Dorsolateral prefrontal cortex (tissue), 120 donors: ENCODE measurements at regions of chr2 and their contacts with region 1.

Region 1: DNA sequence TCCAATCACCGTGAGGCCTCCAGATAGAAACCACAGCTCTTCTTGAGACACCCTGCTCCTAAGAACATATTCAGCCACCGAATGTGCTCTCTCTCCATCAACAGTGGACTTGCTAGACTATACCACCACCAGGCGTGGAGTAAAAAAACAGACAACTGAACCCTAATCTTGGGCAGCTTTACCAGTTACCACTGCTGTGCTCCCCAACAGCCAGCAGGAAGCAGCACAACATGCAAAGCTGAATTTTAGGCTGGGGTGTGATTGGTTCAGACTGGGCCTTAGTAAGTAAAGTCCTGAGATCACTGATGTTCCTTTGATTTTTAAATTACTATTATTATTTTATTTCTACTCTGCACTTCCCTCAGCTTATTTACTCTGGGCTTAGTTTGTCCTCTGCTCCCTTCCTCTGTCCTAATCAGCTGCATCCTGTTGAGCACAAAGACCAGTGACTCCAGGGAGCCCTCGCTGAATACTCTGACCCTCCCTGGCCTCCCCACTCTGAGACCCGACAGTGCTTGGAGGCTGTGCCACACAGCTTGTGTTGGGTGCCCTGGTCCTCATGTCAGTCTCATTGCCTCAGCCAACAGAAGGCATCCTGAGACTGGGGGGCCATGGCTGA is 21.9 kb downstream of the MRPL35 start:
- DNase-seq: peak in 5 of 10 donors; percentile 13 to 65 (median 58)
- H3K4me3 ChIP-seq: no peak overlapping the region
- H3K27ac ChIP-seq: peak overlapping the region in 40 of 59 donors; percentile 10 to 95 (median 82)
- H3K27me3 ChIP-seq: no peaks in the 10 kb centered on the region
- CTCF ChIP-seq: peak; percentile 23 to 98 (median 93)

Region 2: DNA sequence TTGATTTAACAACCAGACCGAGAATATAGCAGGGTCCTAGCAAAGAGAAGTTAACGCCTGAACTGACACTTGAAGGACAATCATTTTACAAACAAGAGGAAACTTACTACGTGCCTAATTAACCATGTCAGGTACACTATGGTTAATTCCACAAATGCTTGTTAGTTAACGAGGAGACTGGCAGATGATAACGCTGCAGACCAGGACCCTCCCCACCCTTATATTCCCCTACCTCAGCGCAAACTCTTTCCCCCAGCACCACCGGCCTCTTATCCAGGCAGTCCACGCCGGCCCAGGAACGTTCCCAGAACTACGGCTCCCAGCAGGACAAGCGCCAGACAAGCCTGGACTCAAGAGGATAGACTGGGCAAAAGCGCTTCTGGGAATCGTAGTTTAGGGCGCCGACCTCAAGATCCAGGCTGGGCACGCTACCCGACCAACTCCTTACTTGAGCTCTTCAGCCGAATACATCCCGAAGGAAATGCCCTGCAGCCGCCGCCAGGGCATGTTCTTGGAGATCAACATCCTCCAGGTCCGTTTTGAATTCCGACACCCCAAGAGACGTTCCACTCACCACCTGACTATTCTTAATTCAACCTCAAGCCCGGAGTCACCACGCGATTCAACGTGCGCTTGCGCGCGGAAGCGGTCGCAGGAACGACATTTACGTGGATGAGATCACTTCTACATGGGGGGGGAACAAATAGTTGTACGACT is 115.8 kb before region 1 on chr2 and contains the start of gene POLR1A:
- intact Hi-C with region 1: no loop called
- DNase-seq: peak; percentile 82 to 96 (median 94)
- H3K4me3 ChIP-seq: peak within 1 kb of the TSS; percentile 65 to 100 (median 93)
- H3K27ac ChIP-seq: peak within 1 kb of the TSS; percentile 68 to 98 (median 92)
- H3K27me3 ChIP-seq: no peaks in the 10 kb centered on the region
- CTCF ChIP-seq: peak in 14 of 56 donors; percentile 3 to 24 (median 11)
- total RNA-seq, gene POLR1A: 24.2 to 44.6 (median 34.2) TPM

Region 3: GRCh38 chr2:86195055-86195807 is 25.9 kb before region 1 on chr2 and contains the start of gene IMMT:
- intact Hi-C with region 1: loop called in 1 of 2 experiments (anchors 2 kb)
- DNase-seq: peak; percentile 92 to 99 (median 96)
- H3K4me3 ChIP-seq: peak within 1 kb of the TSS; percentile 57 to 100 (median 97)
- H3K27ac ChIP-seq: peak within 1 kb of the TSS; percentile 63 to 99 (median 97)
- H3K27me3 ChIP-seq: no peaks in the 10 kb centered on the region
- CTCF ChIP-seq: peak in 28 of 56 donors; percentile 6 to 44 (median 22)
- total RNA-seq, gene IMMT: 46.6 to 117 (median 78.3) TPM

Region 4: GRCh38 chr2:86298411-86299379 is 77.5 kb after region 1 on chr2:
- intact Hi-C with region 1: loop called (anchors 5 to 10 kb)
- DNase-seq: peak in 6 of 10 donors; percentile 16 to 66 (median 46)
- H3K4me3 ChIP-seq: no peak overlapping the region
- H3K27ac ChIP-seq: peak overlapping the region in 58 of 59 donors; percentile 22 to 90 (median 75)
- H3K27me3 ChIP-seq: no peaks in the 10 kb centered on the region
- CTCF ChIP-seq: peak in 54 of 56 donors; percentile 29 to 77 (median 58)

Region 5: GRCh38 chr2:86368161-86368824 is 147.1 kb after region 1 on chr2:
- intact Hi-C with region 1: loop called (anchors 2 to 10 kb)
- DNase-seq: peak in 3 of 10 donors; percentile 5 to 54 (median 24)
- H3K4me3 ChIP-seq: peak overlapping the region in 13 of 59 donors; percentile 0 to 38 (median 20)
- H3K27ac ChIP-seq: peak overlapping the region in 1 of 59 donors; percentile 36
- H3K27me3 ChIP-seq: no peaks in the 10 kb centered on the region
- CTCF ChIP-seq: peak in 55 of 56 donors; percentile 39 to 79 (median 65)

Region 6: DNA sequence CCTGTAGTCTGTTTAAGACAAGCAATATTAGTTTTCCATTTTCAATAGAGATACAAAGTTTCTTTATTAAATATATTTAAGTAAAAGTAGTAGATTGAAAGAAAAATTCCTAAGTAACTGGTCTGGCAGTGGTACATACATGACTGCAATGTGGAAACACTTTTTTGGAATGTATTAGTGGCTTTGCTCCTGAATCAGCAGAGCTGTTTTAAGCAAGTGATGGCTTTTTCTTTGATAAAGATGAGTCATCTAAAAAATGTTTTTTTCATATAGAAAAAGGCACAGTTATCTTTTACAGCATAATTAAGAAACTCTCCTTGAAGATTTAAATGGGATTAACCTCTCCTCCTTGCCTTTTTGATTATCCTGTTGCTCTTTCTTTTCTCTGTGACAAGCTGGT is 254.9 kb after region 1 on chr2:
- intact Hi-C with region 1: no loop called
- DNase-seq: no peak
- H3K4me3 ChIP-seq: no peak overlapping the region
- H3K27ac ChIP-seq: peak overlapping the region in 1 of 59 donors; percentile 23
- H3K27me3 ChIP-seq: no peaks in the 10 kb centered on the region
- CTCF ChIP-seq: no peak